Activated naive CD4-positive, alpha-beta T cell treated with anti-CD3 and anti-CD28 coated beads for 36 hours (primary cell): ENCODE measurements at regions of chr5 and their contacts with region 1.

Region 1: DNA sequence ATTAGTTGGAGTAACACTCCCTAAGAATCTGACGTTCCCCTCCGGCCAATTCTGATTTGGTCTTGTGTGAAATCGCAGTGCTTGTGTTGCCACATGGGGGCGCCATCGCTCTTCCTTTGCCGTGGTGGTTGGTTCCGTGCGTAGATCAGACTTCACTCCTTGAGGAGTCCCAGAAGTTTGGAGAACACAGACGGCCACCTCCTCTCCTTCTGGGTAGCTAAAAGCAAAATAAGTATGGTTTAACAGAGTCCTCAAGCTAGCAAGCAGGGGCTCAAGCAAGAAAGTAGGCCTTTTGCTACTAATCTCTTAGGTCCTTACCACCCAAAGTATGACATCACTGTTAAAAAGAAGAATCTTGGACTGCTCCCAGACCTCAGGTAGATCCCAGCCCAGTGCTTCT is 59.5 kb downstream of the HSPA4 start:
- DNase-seq: peak; percentile 89
- H3K4me3 Mint-ChIP-seq: no peak overlapping the region
- H3K27ac Mint-ChIP-seq: no peak overlapping the region
- H3K4me1 Mint-ChIP-seq: peaks cover 21% of the 10 kb centered on the region
- H3K27me3 Mint-ChIP-seq: no peaks in the 10 kb centered on the region

Region 2: DNA sequence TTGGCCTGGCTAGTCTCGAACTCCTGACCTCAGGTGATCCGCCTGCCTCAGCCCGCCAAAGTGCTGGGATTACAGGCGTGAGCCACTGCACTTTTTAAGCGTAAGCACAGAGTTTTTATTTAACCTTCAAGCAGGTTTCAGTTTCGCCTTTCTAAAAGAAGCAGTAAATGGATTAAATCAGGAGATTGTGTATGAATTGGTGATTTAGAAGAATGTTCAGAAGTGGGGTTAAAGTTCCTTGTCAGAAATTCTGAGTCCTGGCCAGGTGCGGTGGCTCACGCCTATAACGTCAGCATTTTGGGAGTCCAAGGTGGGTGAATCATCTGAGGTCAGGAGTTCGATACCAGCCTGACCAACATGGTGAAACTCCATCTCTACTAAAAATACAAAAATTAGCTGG is 47.3 kb before region 1 on chr5:
- CTCF ChIA-PET with region 1: no interaction called
- intact Hi-C with region 1: no loop called
- DNase-seq: no peak
- H3K4me3 Mint-ChIP-seq: no peak overlapping the region
- H3K27ac Mint-ChIP-seq: no peak overlapping the region
- H3K4me1 Mint-ChIP-seq: peaks cover 33% of the 10 kb centered on the region
- H3K27me3 Mint-ChIP-seq: no peaks in the 10 kb centered on the region

Region 3: DNA sequence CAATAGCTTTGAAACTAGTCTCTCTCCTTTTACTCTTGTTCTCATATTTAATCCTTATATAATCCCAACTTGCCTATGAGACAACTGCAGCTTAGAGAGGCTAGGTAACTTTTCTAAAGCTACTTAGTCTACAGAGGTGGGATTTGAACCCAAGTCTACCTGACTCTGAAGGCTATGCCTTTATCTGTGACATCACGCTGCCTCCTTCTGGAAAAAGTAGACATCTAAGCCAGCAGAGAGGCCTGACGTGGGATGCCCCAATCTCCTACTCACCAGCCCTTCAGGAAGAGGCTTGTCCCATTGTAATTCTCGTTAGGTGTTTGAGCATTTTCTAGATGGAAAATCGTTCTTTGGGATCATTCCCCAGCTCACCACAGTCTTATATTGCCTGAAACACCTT is 108.0 kb after region 1 on chr5:
- CTCF ChIA-PET with region 1: interaction called, 5 read pairs
- intact Hi-C with region 1: loop called (anchors 5 kb)
- DNase-seq: no peak
- H3K4me3 Mint-ChIP-seq: no peak overlapping the region
- H3K27ac Mint-ChIP-seq: no peak overlapping the region
- H3K4me1 Mint-ChIP-seq: no peaks in the 10 kb centered on the region
- H3K27me3 Mint-ChIP-seq: no peaks in the 10 kb centered on the region

Region 4: GRCh38 chr5:133260715-133261114 is 149.4 kb after region 1 on chr5:
- CTCF ChIA-PET with region 1: interaction called, 5 read pairs
- intact Hi-C with region 1: loop called (anchors 1 kb)
- DNase-seq: no peak
- H3K4me3 Mint-ChIP-seq: no peak overlapping the region
- H3K27ac Mint-ChIP-seq: no peak overlapping the region
- H3K4me1 Mint-ChIP-seq: peaks cover 11% of the 10 kb centered on the region
- H3K27me3 Mint-ChIP-seq: no peaks in the 10 kb centered on the region

Region 5: GRCh38 chr5:133347039-133347438 is 235.7 kb after region 1 on chr5:
- CTCF ChIA-PET with region 1: interaction called, 5 read pairs
- intact Hi-C with region 1: loop called (anchors 1 kb)
- DNase-seq: peak; percentile 38
- H3K4me3 Mint-ChIP-seq: no peak overlapping the region
- H3K27ac Mint-ChIP-seq: no peak overlapping the region
- H3K4me1 Mint-ChIP-seq: no peaks in the 10 kb centered on the region
- H3K27me3 Mint-ChIP-seq: peaks cover 10% of the 10 kb centered on the region

Region 6: GRCh38 chr5:133423618-133424282 is 312.5 kb after region 1 on chr5:
- CTCF ChIA-PET with region 1: interaction called, 10 read pairs
- intact Hi-C with region 1: no loop called
- DNase-seq: peak; percentile 79
- H3K4me3 Mint-ChIP-seq: no peak overlapping the region
- H3K27ac Mint-ChIP-seq: no peak overlapping the region
- H3K4me1 Mint-ChIP-seq: peaks cover 10% of the 10 kb centered on the region
- H3K27me3 Mint-ChIP-seq: no peaks in the 10 kb centered on the region